Calu3 (cell line): ENCODE measurements at regions of chr6 and their contacts with region 1.

Region 1: DNA sequence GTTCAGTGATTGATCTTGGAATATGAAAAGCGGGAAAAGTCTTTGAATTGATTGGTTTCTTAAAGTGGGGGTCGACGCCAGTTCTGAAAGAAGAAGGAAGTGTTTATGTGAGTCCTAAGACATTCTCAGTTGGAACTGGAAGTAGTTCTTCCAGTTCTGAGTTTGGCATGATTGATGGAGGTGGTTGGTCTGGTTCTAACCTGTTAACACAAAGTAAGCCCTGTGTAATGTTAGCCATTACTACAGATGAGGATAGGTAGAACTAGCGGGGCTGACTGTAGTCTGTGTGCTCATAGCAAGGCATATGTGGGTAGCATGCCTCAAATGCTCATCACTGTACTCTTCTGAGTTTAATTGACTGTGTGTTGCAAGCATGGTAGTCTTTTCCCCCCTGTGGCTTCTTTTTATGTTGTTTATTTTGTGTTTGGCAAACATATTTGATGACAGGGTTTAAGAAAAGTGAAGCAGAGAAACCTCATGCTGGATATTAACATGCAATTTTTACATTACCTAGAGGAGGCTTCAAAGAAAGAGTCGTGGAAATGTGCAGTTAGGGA is 24.9 kb downstream of the CITED2 start:
- DNase-seq: peak; percentile 47
- H3K4me3 Mint-ChIP-seq: no peak overlapping the region
- H3K27ac Mint-ChIP-seq: no peak overlapping the region
- H3K4me1 Mint-ChIP-seq: peaks cover 19% of the 10 kb centered on the region
- H3K27me3 Mint-ChIP-seq: no peaks in the 10 kb centered on the region
- CTCF ChIP-seq: no peak

Region 2: DNA sequence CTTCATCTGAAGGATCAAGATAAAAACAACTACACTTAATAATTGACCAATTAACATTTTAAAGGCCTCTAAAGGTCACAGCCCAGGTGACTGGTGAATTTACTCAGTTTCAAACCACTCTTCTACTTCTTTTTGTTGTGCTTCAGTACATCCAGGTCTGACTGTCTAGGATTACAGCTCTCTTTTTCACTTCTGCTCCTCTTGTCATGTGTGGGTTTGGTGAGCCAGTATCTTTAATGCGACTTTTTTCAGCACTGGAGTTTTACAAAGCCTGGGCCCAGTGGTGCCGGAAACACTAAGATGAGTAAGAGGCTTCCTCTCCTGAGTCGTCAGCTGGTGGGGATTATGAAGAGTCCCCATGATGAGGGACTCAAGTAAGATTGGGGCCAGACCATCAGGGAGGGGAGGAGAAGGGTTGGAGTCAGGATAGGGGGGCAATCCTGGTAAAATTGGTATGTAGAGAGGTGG is 187.7 kb before region 1 on chr6:
- CTCF ChIA-PET with region 1: no interaction called
- intact Hi-C with region 1: no loop called
- DNase-seq: no peak
- H3K4me3 Mint-ChIP-seq: no peak overlapping the region
- H3K27ac Mint-ChIP-seq: no peak overlapping the region
- H3K4me1 Mint-ChIP-seq: peaks cover 14% of the 10 kb centered on the region
- H3K27me3 Mint-ChIP-seq: no peaks in the 10 kb centered on the region
- CTCF ChIP-seq: no peak

Region 3: DNA sequence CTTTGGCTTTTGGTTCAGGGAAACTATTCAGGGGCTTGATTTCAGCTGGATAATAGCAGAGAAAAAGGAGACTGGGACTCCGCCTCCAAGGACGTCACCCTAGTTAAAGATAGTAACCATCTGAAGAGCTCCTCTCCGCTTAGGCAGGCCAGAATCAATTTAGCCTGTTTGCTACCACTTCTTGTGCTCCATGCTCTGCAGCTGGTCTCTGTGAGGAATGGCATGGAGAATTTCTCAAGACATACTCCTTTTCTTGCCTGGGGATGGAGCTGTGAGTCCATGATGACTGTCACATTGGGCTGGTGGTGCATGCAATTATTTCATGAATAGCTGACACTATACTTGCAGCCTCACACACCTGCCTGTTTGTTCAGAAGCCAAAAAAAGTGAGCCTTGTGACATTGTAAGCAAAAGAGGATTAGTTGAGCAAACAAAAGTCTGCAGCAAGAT is 119.1 kb before region 1 on chr6:
- CTCF ChIA-PET with region 1: no interaction called
- intact Hi-C with region 1: loop called (anchors 5 kb)
- DNase-seq: no peak
- H3K4me3 Mint-ChIP-seq: no peak overlapping the region
- H3K27ac Mint-ChIP-seq: no peak overlapping the region
- H3K4me1 Mint-ChIP-seq: no peaks in the 10 kb centered on the region
- H3K27me3 Mint-ChIP-seq: no peaks in the 10 kb centered on the region
- CTCF ChIP-seq: no peak